Caco-2 (cell line): ENCODE measurements at regions of chr11 and their contacts with region 1.

Region 1: DNA sequence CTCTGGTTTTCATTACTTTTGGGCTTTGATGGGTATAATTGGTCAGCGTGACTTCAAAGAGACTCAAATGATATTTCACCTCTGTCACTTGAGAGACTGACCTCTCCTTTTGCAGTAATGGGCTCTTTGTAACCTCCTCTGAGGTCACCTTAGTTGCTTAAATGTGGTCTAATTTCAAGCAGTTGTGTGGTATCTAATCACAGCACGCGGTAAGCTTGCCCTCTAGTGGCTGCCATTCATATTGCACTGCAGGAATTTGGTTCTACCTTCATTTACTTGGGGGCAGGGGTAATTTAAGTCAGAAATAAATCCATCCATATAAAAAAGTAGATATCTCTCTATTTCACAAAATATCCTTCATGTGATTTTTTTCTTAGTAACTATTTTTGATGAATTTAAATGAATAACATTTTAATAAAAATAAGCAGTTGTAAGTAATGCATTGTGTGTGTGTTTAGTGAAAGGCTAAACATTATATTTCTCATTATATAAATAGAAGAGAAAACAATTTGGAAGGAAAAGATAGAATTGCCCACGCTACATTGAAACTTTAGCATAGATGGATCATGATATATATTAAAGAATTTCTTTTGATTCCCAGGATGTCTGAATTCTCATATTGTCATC is 55.0 kb upstream of the ANO3 start:
- DNase-seq: peak; percentile 42 to 62
- H3K4me3 ChIP-seq: no peak overlapping the region
- H3K4me3 Mint-ChIP-seq: no peak overlapping the region
- H3K27ac Mint-ChIP-seq: no peak overlapping the region
- H3K4me1 ChIP-seq: no peaks in the 10 kb centered on the region
- H3K4me1 Mint-ChIP-seq: no peaks in the 10 kb centered on the region
- H3K27me3 ChIP-seq: no peaks in the 10 kb centered on the region
- H3K27me3 Mint-ChIP-seq: peaks cover 6% of the 10 kb centered on the region
- CTCF ChIP-seq: peak; percentile 89 to 93

Region 2: DNA sequence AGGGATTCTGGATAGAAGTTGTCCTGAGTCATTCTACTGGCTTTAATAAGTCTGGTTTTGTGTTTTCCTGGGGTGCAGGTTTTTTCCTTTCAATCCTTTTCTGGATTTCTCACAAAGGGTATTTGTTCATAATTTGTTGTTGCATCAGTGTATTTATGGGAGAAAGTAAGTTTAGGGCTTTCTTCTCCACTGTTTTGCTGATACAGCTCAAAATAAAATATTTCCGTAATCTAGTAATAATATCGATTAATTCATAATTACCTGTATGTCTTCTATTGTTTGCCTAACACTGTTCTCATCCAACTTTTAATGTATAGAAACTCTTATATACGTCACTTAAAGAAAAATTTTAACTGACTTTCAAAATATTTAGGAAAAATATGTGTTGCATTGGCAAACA is 1051.8 kb before region 1 on chr11:
- CTCF ChIA-PET with region 1: no interaction called
- POLR2A ChIA-PET with region 1: no interaction called
- intact Hi-C with region 1: no loop called
- DNase-seq: no peak
- H3K4me3 ChIP-seq: no peak overlapping the region
- H3K4me3 Mint-ChIP-seq: no peak overlapping the region
- H3K27ac Mint-ChIP-seq: no peak overlapping the region
- H3K4me1 ChIP-seq: no peaks in the 10 kb centered on the region
- H3K4me1 Mint-ChIP-seq: no peaks in the 10 kb centered on the region
- H3K27me3 ChIP-seq: no peaks in the 10 kb centered on the region
- H3K27me3 Mint-ChIP-seq: no peaks in the 10 kb centered on the region
- CTCF ChIP-seq: no peak

Region 3: GRCh38 chr11:25981998-25982397 is 294.9 kb before region 1 on chr11:
- CTCF ChIA-PET with region 1: interaction called, 6 read pairs
- POLR2A ChIA-PET with region 1: no interaction called
- intact Hi-C with region 1: loop called (anchors 1 kb)
- DNase-seq: peak in 1 of 2 experiments; percentile 59
- H3K4me3 ChIP-seq: no peak overlapping the region
- H3K4me3 Mint-ChIP-seq: no peak overlapping the region
- H3K27ac Mint-ChIP-seq: no peak overlapping the region
- H3K4me1 ChIP-seq: no peaks in the 10 kb centered on the region
- H3K4me1 Mint-ChIP-seq: no peaks in the 10 kb centered on the region
- H3K27me3 ChIP-seq: no peaks in the 10 kb centered on the region
- H3K27me3 Mint-ChIP-seq: peaks cover 8% of the 10 kb centered on the region
- CTCF ChIP-seq: peak; percentile 47 to 56

Region 4: GRCh38 chr11:26095340-26095739 is 181.6 kb before region 1 on chr11:
- CTCF ChIA-PET with region 1: no interaction called
- POLR2A ChIA-PET with region 1: no interaction called
- intact Hi-C with region 1: loop called (anchors 2 kb)
- DNase-seq: peak in 1 of 2 experiments; percentile 5
- H3K4me3 ChIP-seq: no peak overlapping the region
- H3K4me3 Mint-ChIP-seq: no peak overlapping the region
- H3K27ac Mint-ChIP-seq: no peak overlapping the region
- H3K4me1 ChIP-seq: no peaks in the 10 kb centered on the region
- H3K4me1 Mint-ChIP-seq: no peaks in the 10 kb centered on the region
- H3K27me3 ChIP-seq: 0 out of 2 replicates have a peak, but pooled peaks cover 1% of the 10 kb centered on the region
- H3K27me3 Mint-ChIP-seq: peaks cover 4% of the 10 kb centered on the region
- CTCF ChIP-seq: peak in 1 of 2 experiments; percentile 3

Region 5: DNA sequence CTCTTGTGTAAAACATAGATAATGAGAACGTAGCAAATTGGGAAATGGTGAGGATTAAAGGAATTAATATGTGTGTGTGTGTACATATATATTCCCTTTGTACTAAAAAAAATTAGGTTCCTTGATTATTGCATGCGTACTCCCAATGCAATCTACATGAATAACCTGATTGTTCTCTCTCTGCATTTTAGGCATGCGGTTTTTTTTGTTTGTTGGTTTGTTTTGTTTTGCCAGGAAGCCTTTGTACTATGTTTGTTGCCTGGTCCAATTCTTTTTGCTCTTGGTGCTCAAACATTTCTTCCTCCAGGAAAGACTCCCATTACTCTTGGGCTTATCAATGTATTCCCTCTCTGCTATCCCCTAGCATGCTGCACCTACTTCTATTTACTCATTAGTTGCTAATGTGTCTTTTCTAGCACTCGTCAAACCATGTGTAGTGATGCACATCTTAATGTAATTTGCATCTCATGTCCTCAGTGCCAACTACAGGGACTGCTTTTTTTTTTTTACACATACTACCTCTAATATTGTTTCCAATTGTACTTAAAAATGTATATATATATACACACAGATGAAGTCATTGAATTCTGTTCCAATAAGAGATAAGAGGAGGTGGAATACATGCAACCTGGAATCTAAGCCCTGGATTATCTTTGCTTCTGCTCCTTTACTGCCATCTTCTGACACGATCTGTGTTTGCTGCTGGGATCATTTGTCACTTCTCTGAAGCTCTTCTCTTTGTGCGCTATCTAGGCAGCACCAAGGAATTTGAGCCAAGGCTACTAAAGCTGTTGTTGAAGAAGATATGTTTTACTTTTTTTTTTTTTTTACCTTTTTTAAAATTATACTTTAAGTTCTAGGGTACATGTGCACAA is 142.2 kb before region 1 on chr11:
- CTCF ChIA-PET with region 1: interaction called, 3 read pairs
- POLR2A ChIA-PET with region 1: no interaction called
- intact Hi-C with region 1: loop called (anchors 2 kb)
- DNase-seq: peak in 1 of 2 experiments; percentile 31
- H3K4me3 ChIP-seq: no peak overlapping the region
- H3K4me3 Mint-ChIP-seq: no peak overlapping the region
- H3K27ac Mint-ChIP-seq: no peak overlapping the region
- H3K4me1 ChIP-seq: no peaks in the 10 kb centered on the region
- H3K4me1 Mint-ChIP-seq: no peaks in the 10 kb centered on the region
- H3K27me3 ChIP-seq: no peaks in the 10 kb centered on the region
- H3K27me3 Mint-ChIP-seq: peaks cover 2% of the 10 kb centered on the region
- CTCF ChIP-seq: peak; percentile 24 to 49

Region 6: DNA sequence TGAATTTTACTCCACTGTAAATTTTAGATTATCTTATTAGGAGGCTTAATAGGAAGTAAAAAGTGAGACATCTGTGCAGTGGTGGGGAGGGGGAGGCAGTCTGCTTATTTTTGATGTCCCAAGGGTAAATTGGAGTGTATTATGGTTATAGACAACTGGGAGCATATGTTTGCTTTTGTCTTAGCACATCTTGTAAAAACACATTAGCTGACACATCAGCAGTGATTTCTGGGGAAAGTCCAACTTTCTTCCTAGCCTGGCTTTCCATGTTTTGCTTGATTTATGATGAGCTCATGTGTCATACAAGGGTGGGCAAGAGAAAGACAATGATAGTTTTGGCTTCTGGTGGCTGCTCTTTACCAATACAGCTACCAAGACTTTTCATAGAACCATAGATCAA is 59.0 kb after region 1 on chr11:
- CTCF ChIA-PET with region 1: no interaction called
- POLR2A ChIA-PET with region 1: no interaction called
- intact Hi-C with region 1: no loop called
- DNase-seq: no peak
- H3K4me3 ChIP-seq: no peak overlapping the region
- H3K4me3 Mint-ChIP-seq: no peak overlapping the region
- H3K27ac Mint-ChIP-seq: no peak overlapping the region
- H3K4me1 ChIP-seq: no peaks in the 10 kb centered on the region
- H3K4me1 Mint-ChIP-seq: no peaks in the 10 kb centered on the region
- H3K27me3 ChIP-seq: no peaks in the 10 kb centered on the region
- H3K27me3 Mint-ChIP-seq: peaks cover 11% of the 10 kb centered on the region
- CTCF ChIP-seq: no peak

Region 7: DNA sequence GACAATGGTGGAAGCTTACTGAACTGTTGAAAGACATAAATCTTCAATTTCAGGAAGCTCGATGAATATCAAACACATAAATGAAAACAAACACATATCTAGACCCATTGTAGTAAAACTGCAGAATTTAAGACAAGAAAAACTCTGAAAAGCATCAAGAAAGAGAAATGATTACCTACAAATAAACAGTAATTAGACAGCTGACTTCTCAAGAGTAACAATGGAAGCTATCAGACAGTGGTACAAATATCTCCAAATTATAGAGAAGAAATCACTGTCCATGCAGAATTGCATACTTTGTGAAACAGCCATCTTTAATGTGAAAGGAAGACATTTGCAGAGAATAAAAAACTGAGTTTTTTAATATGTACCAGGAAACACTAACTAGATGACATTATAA is 100.7 kb after region 1 on chr11:
- CTCF ChIA-PET with region 1: no interaction called
- POLR2A ChIA-PET with region 1: no interaction called
- intact Hi-C with region 1: no loop called
- DNase-seq: no peak
- H3K4me3 ChIP-seq: no peak overlapping the region
- H3K4me3 Mint-ChIP-seq: no peak overlapping the region
- H3K27ac Mint-ChIP-seq: no peak overlapping the region
- H3K4me1 ChIP-seq: no peaks in the 10 kb centered on the region
- H3K4me1 Mint-ChIP-seq: no peaks in the 10 kb centered on the region
- H3K27me3 ChIP-seq: no peaks in the 10 kb centered on the region
- H3K27me3 Mint-ChIP-seq: no peaks in the 10 kb centered on the region
- CTCF ChIP-seq: no peak